GM13977 (cell line): ENCODE measurements at regions of chr17 and their contacts with region 1.

Region 1: GRCh38 chr17:13594762-13595598 is 6.7 kb downstream of the HS3ST3A1 start:
- DNase-seq: peak; percentile 67
- CTCF ChIP-seq: peak; percentile 82

Region 2: GRCh38 chr17:13698832-13699231 is 103.9 kb after region 1 on chr17:
- in situ Hi-C with region 1: loop called (anchors 25 kb)
- DNase-seq: no peak
- CTCF ChIP-seq: no peak

Region 3: GRCh38 chr17:14300575-14301278 is 705.7 kb after region 1 on chr17 and contains the start of gene HS3ST3B1:
- in situ Hi-C with region 1: loop called (anchors 25 kb)
- DNase-seq: peak; percentile 86
- CTCF ChIP-seq: no peak

Region 4: DNA sequence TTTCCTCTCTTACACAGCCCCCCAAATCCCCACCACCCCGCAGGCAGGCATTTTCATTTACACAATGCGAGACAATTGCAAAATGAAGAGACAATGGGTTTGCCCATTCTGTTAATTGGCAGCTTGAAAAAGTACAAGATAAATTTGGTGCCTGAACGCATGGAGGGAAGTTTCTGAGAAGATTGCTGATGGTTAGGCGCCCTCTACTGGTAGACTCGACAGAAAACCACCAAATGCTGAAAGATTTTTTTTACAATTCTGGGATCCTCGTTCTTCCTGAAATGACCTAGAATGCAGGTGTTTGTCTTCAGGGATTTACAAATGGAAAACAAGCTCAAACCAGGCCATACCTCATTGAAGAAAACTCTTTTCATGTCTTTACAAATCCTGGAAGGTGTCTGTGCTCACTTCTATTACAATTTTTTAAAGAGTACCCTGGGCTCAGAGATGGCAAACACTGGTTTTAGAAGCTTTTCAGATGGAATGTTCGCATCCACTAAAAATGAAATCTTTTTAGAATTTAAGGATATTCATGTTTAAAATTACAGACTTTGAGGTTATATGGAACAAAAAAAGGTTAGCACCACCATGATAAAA is 1331.6 kb after region 1 on chr17:
- in situ Hi-C with region 1: loop called (anchors 25 kb)
- DNase-seq: peak; percentile 12
- CTCF ChIP-seq: peak; percentile 74